Transverse colon (tissue), 4 donors: ENCODE measurements at regions of chr14 and their contacts with region 1.

Region 1: DNA sequence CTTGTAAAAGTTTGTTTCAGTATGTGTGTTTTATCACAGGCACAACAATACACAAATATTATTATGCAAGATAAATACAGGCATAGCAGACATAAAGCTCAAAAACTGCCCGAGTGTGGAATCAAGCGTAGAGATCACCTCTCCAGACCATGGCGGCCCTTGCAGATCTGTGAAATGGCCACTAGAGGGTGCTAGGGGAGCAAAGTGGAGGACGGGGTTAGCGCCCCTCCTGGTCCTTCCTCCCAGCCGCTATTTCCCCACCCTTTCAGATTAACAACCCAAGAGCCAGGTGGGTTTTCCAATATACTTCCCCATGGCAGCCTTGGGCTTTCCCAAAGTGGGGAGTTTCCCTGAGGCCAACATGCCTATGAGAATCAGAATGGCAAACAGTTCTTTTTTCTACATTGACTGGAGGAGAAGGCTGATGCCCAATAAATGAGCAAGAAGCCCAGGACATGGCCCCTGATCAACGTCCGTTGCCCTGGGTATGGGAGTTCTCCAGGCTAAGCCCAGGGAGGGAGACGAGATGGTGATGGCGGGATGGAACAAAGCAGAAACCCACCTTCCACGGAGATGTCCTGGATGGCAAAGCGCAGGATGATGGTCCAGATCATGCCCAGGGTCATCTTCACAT is 67.4 kb downstream of the ACTN1 start:
- DNase-seq: peak; percentile 78
- H3K4me3 ChIP-seq: no peak overlapping the region
- H3K27ac ChIP-seq: peak overlapping the region; percentile 55 to 99 (median 76)
- H3K4me1 ChIP-seq: peaks cover 0 to 18% (median 8%) of the 10 kb centered on the region in 4 donors
- H3K27me3 ChIP-seq: no peaks in the 10 kb centered on the region
- CTCF ChIP-seq: peak; percentile 96 to 98 (median 97)
- EP300 ChIP-seq: no peak
- POLR2A ChIP-seq: no peak

Region 2: GRCh38 chr14:69090187-69090789 is 178.6 kb after region 1 on chr14:
- in situ Hi-C with region 1: loop called (anchors 5 to 25 kb)
- intact Hi-C with region 1: loop called (anchors 10 kb)
- DNase-seq: peak; percentile 15
- H3K4me3 ChIP-seq: no peak overlapping the region
- H3K27ac ChIP-seq: peak overlapping the region; percentile 76 to 84 (median 78)
- H3K4me1 ChIP-seq: peaks cover 2 to 33% (median 7%) of the 10 kb centered on the region in 4 donors
- H3K27me3 ChIP-seq: no peaks in the 10 kb centered on the region
- CTCF ChIP-seq: peak; percentile 51 to 65 (median 58)
- EP300 ChIP-seq: no peak
- POLR2A ChIP-seq: no peak

Region 3: GRCh38 chr14:69096781-69097475 is 185.2 kb after region 1 on chr14:
- in situ Hi-C with region 1: loop called (anchors 5 to 25 kb)
- intact Hi-C with region 1: loop called (anchors 10 kb)
- DNase-seq: no peak
- H3K4me3 ChIP-seq: no peak overlapping the region
- H3K27ac ChIP-seq: peak overlapping the region; percentile 15 to 52 (median 30)
- H3K4me1 ChIP-seq: peaks cover 2 to 18% (median 11%) of the 10 kb centered on the region in 4 donors
- H3K27me3 ChIP-seq: no peaks in the 10 kb centered on the region
- CTCF ChIP-seq: no peak
- EP300 ChIP-seq: no peak
- POLR2A ChIP-seq: no peak